Sciatic nerve (tissue), 2 donors: ENCODE measurements at regions of chr6 and their contacts with region 1.

Region 1: GRCh38 chr6:10210052-10210451 is 204.8 kb downstream of the TFAP2A start:
- DNase-seq: no peak
- ATAC-seq: no peak

Region 2: GRCh38 chr6:10163200-10163962 is 46.7 kb before region 1 on chr6:
- intact Hi-C with region 1: no loop called
- DNase-seq: no peak
- ATAC-seq: no peak

Region 3: DNA sequence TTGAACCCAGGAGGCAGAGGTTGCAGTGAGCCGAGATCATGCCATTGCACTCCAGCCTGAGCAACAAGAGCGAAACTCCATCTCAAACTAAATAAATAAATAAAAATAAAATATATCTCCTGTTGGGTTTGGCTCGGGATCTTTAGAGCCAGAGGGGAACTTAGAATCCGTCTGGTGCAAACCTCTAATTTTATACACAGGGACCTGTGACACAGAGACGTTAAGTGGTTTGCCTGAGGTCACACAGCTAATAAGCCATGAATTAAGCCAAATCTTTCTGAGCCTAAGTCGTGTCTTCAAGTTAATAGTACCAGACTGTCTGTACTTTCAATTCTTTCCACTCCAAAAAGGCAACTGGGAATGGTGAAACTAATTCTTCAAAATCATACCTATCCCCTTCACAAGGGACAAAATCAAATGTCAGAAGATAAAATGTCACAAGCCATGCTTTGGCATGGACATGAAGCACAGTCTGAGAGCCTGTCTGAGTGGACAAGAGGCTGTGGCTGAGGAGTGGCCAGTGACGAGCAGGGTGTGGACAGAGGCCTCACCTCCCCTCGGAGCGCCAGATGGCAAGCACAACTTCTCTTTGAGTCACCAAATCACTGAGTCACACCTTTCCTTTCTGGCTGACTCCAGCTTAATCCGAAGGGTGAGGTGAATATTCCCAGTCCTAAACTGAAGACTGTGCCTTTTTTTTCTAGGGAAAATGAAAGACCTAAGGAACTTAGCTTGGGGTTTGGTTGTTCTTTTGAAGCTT is 27.4 kb after region 1 on chr6:
- intact Hi-C with region 1: loop called (anchors 1 kb)
- DNase-seq: no peak
- ATAC-seq: no peak

Region 4: GRCh38 chr6:10256113-10256690 is 46.1 kb after region 1 on chr6:
- intact Hi-C with region 1: no loop called
- DNase-seq: no peak
- ATAC-seq: no peak

Region 5: GRCh38 chr6:10659699-10660348 is 449.8 kb after region 1 on chr6:
- intact Hi-C with region 1: no loop called
- DNase-seq: no peak
- ATAC-seq: no peak